H1 (cell line): ENCODE measurements at regions of chr22 and their contacts with region 1.

Region 1: GRCh38 chr22:17283423-17283822 is 64.2 kb upstream of the ADA2 start:
- DNase-seq: no peak
- H3K4me3 ChIP-seq: no peak overlapping the region
- H3K27ac ChIP-seq: no peak overlapping the region
- H3K4me1 ChIP-seq: no peaks in the 10 kb centered on the region
- H3K27me3 ChIP-seq: no peaks in the 10 kb centered on the region
- CTCF ChIP-seq: peak in 2 of 3 experiments; percentile 1 to 9; a peak in 2 of 4 replicates
- EP300 ChIP-seq: no peak
- POLR2A ChIP-seq: no peak
- RAD21 ChIP-seq: peak; percentile 22 to 38; a peak in 2 of 4 replicates

Region 2: GRCh38 chr22:17303840-17304779 is 20.7 kb after region 1 on chr22:
- CTCF ChIA-PET with region 1: interaction called, 18 read pairs
- POLR2A ChIA-PET with region 1: interaction called, 4 read pairs
- DNase-seq: no peak
- H3K4me3 ChIP-seq: no peak overlapping the region
- H3K27ac ChIP-seq: no peak overlapping the region
- H3K4me1 ChIP-seq: peaks cover 5 to 9% (median 6%) of the 10 kb centered on the region in 4 experiments; a peak in 6 of 7 replicates
- H3K27me3 ChIP-seq: no peaks in the 10 kb centered on the region
- CTCF ChIP-seq: peak in 2 of 3 experiments; percentile 1 to 7; a peak in 2 of 4 replicates
- EP300 ChIP-seq: no peak
- POLR2A ChIP-seq: no peak
- RAD21 ChIP-seq: no peak